Activated T-helper 1 cell treated with anti-CD3 and anti-CD28 coated beads, Interleukin-12 subunit alpha, Interleukin-12 subunit beta, Interleukin-2, Interleukin-4 antibody, amounts not matched to agents 30 ng/mL and 10 ng/mL and 1 ng/mL, durations not matched to agents 14 hours and 24 hours and 36 hours (primary cell): ENCODE measurements at regions of chr18 and their contacts with region 1.

Region 1: DNA sequence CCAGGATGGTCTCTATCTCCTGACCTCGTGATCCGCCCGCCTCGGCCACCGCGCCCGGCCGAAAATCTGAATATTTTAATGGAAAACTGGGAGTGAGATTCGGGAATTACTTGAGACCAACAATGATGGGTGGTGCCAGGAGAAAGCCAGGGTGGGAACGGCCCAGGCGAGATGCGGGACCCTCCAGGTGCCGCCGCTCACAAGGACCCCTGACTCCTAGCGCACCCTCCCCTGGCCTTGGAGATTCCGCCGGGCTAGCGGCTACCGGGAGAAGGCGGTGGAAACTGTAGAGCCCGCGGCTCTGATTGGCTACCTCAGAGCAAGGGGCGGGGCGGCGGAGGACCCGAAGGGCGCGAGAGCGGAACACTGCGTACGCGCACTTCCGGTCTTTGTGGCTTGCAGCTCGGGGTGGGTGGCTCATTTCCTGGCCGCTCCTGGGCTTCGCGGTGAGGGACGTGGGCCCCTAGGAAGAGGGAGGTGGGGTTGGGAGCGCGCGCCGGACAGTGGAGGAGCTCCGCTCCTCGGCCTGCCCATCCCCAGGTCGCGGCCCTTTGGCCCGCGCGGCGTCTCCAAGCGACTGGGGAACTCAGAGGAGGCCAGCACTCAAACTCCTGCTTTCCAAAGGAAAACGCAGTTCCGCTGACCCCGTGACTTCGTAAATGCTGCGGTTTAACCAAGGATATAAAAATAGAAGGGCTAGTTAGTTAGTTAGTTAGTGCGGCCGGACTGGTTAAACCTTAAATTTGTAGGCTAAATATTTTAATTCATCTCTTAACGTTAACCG is at the start of gene ZNF397:
- DNase-seq: peak; percentile 95
- H3K4me3 Mint-ChIP-seq: peak within 1 kb of the TSS; percentile 97
- H3K27ac Mint-ChIP-seq: peak within 1 kb of the TSS; percentile 97
- H3K4me1 Mint-ChIP-seq: peaks cover 12% of the 10 kb centered on the region
- H3K27me3 Mint-ChIP-seq: no peaks in the 10 kb centered on the region
- total RNA-seq, gene ZNF397: 18.8 and 21.0 TPM in 2 replicates

Region 2: DNA sequence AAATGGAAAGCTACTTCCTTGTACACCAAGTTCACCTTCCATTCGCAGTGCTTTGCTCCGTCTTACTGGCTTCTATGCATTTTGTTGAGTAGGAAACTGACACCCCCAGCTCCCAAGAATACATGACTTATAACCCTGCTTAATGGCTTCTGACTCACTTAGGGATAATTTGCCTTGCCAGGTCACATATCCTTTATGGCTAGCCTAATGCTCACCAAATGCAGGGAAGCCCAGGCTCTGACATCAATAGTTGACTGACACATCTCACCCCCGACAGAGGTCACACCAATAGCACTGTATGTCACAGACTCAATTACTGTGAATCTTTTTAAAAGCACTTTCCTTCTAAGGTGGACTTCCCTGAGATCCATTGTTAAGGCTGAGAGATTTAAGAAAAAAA is 383.5 kb before region 1 on chr18:
- intact Hi-C with region 1: loop called (anchors 1 kb)
- DNase-seq: no peak
- H3K4me3 Mint-ChIP-seq: no peak overlapping the region
- H3K27ac Mint-ChIP-seq: no peak overlapping the region
- H3K4me1 Mint-ChIP-seq: peaks cover 7% of the 10 kb centered on the region
- H3K27me3 Mint-ChIP-seq: peaks cover 43% of the 10 kb centered on the region

Region 3: GRCh38 chr18:35158728-35159450 is 82.0 kb before region 1 on chr18:
- intact Hi-C with region 1: loop called (anchors 1 kb)
- DNase-seq: peak; percentile 17
- H3K4me3 Mint-ChIP-seq: no peak overlapping the region
- H3K27ac Mint-ChIP-seq: peak overlapping the region; percentile 89
- H3K4me1 Mint-ChIP-seq: peaks cover 29% of the 10 kb centered on the region
- H3K27me3 Mint-ChIP-seq: no peaks in the 10 kb centered on the region

Region 4: GRCh38 chr18:35290073-35290735 is 49.3 kb after region 1 on chr18 and contains the start of gene ZSCAN30:
- intact Hi-C with region 1: loop called (anchors 1 kb)
- DNase-seq: peak; percentile 94
- H3K4me3 Mint-ChIP-seq: peak within 1 kb of the TSS; percentile 100
- H3K27ac Mint-ChIP-seq: peak within 1 kb of the TSS; percentile 99
- H3K4me1 Mint-ChIP-seq: peaks cover 49% of the 10 kb centered on the region
- H3K27me3 Mint-ChIP-seq: no peaks in the 10 kb centered on the region
- total RNA-seq, gene ZSCAN30: 10.2 and 11.0 TPM in 2 replicates

Region 5: DNA sequence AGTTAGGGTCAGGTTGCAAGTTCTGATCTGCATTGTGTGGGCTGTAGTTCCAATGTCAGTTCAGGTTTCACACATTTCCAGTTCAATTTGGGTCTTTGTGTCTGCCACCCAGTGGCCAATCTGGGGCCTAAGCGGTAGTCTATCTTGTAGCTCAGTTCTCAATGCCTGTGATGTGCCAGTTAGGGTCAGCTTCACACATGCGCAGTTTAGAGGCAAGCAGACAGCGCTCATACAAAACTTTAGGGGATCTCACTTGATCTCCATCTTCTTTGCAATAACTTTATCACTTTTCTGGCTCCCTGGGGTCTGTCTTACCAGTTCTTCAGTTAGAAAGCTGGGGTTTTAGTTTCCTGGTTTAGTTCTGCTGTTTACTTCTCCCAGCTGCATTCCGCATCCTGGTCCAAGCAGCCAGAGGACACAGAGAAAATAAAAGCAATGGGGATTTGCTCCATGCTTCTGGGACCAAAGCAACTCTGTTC is 114.3 kb after region 1 on chr18:
- intact Hi-C with region 1: loop called (anchors 2 kb)
- DNase-seq: peak; percentile 26
- H3K4me3 Mint-ChIP-seq: no peak overlapping the region
- H3K27ac Mint-ChIP-seq: no peak overlapping the region
- H3K4me1 Mint-ChIP-seq: peaks cover 4% of the 10 kb centered on the region
- H3K27me3 Mint-ChIP-seq: no peaks in the 10 kb centered on the region

Region 6: GRCh38 chr18:35616664-35617423 is 376.0 kb after region 1 on chr18:
- intact Hi-C with region 1: loop called (anchors 1 kb)
- DNase-seq: peak; percentile 45
- H3K4me3 Mint-ChIP-seq: no peak overlapping the region
- H3K27ac Mint-ChIP-seq: no peak overlapping the region
- H3K4me1 Mint-ChIP-seq: peaks cover 19% of the 10 kb centered on the region
- H3K27me3 Mint-ChIP-seq: no peaks in the 10 kb centered on the region

Region 7: DNA sequence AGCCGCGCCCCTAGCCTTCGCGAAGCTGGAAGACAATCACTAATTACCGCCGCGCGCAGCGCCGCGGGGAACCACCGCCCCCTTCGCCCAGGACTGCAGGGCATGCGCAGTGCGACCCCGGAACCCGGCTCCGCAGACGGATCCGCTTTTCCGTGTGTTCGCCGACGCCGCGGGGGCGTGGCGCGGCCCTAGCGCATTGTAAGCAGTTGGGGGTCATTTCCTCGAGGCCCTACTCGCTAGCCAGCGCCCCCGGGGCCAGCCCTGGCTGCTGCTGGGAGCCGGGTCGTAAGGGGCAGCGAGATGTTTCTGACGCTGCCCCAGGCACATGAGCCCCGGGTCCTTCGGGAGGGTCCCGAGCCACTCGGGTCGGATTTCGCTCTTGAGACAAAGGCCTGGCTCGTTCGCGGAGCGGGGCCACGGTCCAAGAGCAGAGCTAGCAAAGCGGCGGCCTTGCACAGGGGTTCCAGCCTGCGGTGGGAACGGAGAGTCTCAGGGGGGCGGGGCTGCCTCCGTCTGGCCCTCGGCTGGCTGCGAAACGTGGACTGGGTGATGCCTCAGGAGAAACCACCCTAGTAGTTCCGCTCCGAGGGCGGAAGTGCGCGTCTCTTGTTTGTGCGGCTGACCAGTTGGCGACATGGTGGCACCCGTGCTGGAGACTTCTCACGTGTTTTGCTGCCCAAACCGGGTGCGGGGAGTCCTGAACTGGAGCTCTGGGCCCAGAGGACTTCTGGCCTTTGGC is 888.6 kb after region 1 on chr18 and contains the starts of genes ELP2 and SLC39A6:
- intact Hi-C with region 1: loop called (anchors 2 kb)
- DNase-seq: peak; percentile 93
- H3K4me3 Mint-ChIP-seq: peak within 1 kb of the TSS; percentile 89
- H3K27ac Mint-ChIP-seq: peak within 1 kb of the TSS; percentile 91
- H3K4me1 Mint-ChIP-seq: peaks cover 53% of the 10 kb centered on the region
- H3K27me3 Mint-ChIP-seq: no peaks in the 10 kb centered on the region
- total RNA-seq, gene ELP2: 97.1 and 104 TPM in 2 replicates
- total RNA-seq, gene SLC39A6: 53.5 and 54.4 TPM in 2 replicates